OCI-LY7 (cell line): ENCODE measurements at regions of chr9 and their contacts with region 1.

Region 1: DNA sequence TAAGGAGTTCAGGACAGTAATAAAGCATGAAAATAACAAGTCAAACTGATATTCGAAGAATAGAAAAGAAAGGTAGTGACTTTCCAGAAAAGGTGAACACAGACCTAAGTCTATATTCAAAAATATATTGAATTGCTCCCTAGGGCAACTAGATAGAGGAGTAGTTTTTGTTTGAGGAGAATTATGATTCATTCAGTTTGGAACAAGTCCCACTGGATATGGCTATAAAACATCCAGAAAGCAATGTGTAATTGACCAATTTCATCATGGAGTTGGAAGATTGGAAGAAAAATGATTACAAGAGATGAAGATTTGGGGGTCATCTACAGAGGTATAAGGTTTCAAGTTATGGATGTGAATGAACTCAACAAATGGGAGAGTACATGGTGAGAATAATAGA is 117.5 kb upstream of the ZNF462 start:
- DNase-seq: no peak
- H3K4me3 ChIP-seq: no peak overlapping the region
- H3K27ac ChIP-seq: no peak overlapping the region
- H3K4me1 ChIP-seq: no peaks in the 10 kb centered on the region
- CTCF ChIP-seq: no peak

Region 2: DNA sequence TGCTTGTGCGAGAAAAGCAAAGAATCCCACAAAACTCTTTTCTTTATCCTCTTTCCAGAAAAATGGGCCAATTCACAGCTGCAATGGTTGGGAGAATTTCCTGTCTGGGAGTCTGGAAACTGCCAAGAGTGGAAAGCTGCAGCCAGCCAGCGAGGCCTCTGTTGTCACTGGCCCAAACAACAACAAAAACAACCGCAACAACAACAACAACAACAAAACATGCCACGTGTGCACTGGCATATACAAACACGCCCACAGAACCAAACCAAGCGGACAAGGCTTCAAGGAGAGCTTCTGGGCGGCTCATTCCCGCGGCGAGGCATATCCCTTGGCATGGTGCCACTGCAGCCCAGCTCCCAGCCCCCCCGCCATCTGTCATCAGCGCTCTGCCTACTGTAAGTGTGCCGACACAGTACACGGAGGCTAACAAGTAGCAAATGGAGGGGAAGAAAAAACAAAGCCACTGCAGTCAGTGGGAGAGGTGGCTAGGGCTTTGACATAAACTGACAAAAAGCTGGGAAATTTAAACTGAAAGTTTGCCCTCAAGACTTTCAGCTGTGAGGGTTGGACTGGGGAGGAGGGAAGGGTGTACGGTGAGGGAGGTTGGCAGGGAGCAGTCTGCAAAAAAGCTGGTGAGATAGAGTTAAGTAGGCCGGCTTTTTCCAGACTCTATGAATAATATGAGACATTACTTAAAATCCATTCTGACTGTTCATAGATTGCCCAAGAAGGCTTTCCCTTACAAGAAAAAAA is 47.5 kb before region 1 on chr9:
- CTCF ChIA-PET with region 1: no interaction called
- POLR2A ChIA-PET with region 1: interaction called, 10 read pairs
- intact Hi-C with region 1: no loop called
- DNase-seq: no peak
- H3K4me3 ChIP-seq: no peak overlapping the region
- H3K27ac ChIP-seq: no peak overlapping the region
- H3K4me1 ChIP-seq: no peaks in the 10 kb centered on the region
- CTCF ChIP-seq: no peak

Region 3: DNA sequence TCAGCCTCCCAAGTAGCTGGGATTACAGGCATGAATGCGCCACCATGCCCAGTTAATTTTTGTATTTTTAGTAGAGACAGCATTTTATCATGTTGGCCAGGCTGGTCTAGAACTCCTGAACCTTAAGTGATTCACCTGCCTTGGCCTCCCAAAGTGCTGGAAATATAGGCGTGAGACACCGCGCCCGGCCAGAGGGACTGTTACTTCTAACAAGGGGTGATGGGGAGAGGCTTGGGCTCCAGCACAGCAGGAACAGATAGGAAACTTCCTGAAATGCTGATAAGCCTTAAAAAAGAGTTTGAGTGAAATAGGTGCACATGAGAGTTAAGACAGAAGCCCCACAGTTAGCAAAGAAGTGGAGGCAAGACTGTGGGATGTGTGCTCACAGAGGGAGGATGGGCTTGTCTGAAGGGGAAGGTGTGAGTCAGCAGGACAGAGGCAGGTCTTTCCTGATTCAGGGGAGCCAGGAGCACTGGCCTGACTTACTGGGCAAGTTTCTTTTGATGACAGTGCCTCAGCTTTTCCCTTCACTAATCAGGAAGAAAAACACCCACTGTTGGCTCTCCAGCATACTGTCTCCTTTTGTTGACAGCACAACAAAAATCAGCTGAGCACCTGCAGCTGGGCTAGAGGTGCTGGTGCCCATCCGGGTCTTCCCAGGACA is 606.1 kb after region 1 on chr9:
- CTCF ChIA-PET with region 1: no interaction called
- POLR2A ChIA-PET with region 1: no interaction called
- intact Hi-C with region 1: no loop called
- DNase-seq: no peak
- H3K4me3 ChIP-seq: no peak overlapping the region
- H3K27ac ChIP-seq: no peak overlapping the region
- H3K4me1 ChIP-seq: no peaks in the 10 kb centered on the region
- CTCF ChIP-seq: no peak